ENCODE measurements at regions of chr2 and their contacts with region 1.

Region 1: DNA sequence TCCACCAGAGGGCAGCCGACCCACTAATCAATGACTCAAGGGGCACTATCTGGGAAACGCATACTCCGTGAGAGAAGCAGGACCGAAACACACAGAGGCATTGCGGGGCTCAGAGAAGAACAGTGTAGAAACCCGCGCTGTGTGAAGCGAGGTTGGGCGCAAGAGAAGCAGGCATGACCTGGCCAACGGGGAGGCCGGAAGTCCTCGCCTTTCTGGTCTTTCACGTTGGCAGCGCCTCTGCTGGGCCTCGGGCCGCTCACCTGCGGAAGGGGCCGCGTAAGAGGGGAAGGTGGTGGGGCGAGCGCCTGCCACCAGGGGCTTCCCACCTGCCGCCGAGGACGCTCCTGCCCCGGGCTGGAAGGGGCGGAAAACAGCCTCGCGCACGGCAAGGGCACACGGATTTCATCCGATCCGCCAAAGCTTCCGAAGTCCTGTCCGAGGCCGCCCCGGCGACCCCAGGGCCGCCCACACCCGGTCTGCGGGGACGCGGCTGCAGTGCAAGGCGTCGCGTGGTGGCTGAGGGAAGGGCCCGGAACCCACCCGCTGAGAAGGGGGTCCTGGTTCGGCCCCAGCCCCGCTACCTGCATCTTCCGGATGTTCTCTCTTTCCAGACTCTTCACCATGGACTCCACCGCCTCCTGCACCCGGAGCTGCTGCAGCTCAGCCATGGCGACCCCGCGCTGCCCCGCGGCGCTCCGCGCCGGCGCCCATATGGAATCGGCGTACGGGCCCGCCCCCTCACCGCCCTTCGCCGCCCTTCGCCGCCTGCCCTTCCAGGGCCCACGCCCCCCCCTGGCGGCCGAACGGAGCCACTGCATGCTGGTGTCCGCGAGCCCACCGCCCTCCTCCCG is at the start of gene FAM136A:
- DNase-seq: peak; percentile 97
- H3K4me3 Mint-ChIP-seq: peak within 1 kb of the TSS; percentile 91
- H3K27ac Mint-ChIP-seq: peak within 1 kb of the TSS; percentile 93
- H3K4me1 Mint-ChIP-seq: peaks cover 39% of the 10 kb centered on the region
- H3K27me3 Mint-ChIP-seq: no peaks in the 10 kb centered on the region
- total RNA-seq, gene FAM136A: 85.5 and 89.7 TPM in 2 replicates

Region 2: DNA sequence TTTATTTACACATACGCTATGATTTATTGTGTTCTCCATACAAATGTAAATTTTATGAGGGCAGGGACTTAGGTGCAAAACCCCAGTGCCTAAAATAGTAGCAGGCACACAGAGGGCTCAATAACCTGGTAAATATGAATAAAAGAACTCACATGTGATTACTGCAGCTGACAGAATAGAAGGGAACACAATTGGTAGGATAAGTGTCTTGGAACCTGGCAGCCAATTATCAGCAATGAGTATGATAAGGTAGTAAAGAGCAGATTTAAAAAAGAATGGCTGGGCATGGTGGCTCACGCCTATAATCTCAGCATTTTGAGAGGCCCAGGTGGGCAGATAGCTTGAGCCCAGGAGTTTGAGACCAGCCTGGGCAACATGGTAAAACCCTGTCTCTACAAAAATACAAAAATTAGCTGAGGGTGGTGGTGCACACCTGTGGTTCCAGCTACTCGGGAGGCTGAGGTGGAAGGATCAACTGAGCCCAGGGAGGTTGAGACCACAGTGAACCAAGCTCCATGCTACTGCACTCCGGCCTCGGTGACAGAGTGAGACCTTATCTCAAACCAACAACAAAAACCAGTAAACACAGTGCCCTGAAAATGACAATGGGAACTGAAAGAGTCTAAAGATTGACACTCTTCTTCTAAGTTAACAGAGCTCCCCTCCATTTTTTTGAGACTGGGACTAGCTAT is 17.9 kb before region 1 on chr2:
- intact Hi-C with region 1: no loop called
- DNase-seq: no peak
- H3K4me3 Mint-ChIP-seq: no peak overlapping the region
- H3K27ac Mint-ChIP-seq: no peak overlapping the region
- H3K4me1 Mint-ChIP-seq: peaks cover 26% of the 10 kb centered on the region
- H3K27me3 Mint-ChIP-seq: no peaks in the 10 kb centered on the region

Region 3: GRCh38 chr2:70553584-70554337 is 252.2 kb after region 1 on chr2 and contains the start of gene TGFA:
- intact Hi-C with region 1: loop called (anchors 5 kb)
- DNase-seq: peak; percentile 88
- H3K4me3 Mint-ChIP-seq: peak within 1 kb of the TSS; percentile 85
- H3K27ac Mint-ChIP-seq: no peak within 1 kb of the TSS
- H3K4me1 Mint-ChIP-seq: peaks cover 15% of the 10 kb centered on the region
- H3K27me3 Mint-ChIP-seq: peaks cover 68% of the 10 kb centered on the region
- total RNA-seq, gene TGFA: not detected in 2 replicates

Region 4: GRCh38 chr2:70647873-70648481 is 346.4 kb after region 1 on chr2:
- intact Hi-C with region 1: loop called (anchors 1 kb)
- DNase-seq: peak; percentile 91
- H3K4me3 Mint-ChIP-seq: no peak overlapping the region
- H3K27ac Mint-ChIP-seq: no peak overlapping the region
- H3K4me1 Mint-ChIP-seq: peaks cover 2% of the 10 kb centered on the region
- H3K27me3 Mint-ChIP-seq: peaks cover 24% of the 10 kb centered on the region

Region 5: DNA sequence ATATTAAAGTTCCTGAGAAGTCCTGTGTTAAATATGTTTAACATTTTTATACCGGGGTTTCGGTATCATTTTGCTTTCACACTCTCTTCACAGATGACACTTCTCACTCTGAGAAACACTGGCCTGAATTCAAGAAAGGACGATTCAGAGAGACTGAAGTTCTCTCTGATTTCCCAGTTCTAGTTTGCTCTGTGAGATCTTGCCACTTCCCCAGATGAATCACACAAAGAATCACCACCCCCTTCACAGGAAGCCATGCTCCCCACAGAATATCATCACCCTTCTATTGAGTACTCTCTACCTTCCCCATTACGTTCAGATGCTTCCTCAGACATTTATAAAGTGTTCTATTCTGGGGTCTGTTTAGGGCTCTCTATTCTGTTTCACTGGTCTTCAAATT is 550.1 kb after region 1 on chr2:
- intact Hi-C with region 1: loop called (anchors 10 kb)
- DNase-seq: peak; percentile 79
- H3K4me3 Mint-ChIP-seq: peak overlapping the region; percentile 12
- H3K27ac Mint-ChIP-seq: peak overlapping the region; percentile 69
- H3K4me1 Mint-ChIP-seq: peaks cover 23% of the 10 kb centered on the region
- H3K27me3 Mint-ChIP-seq: peaks cover 2% of the 10 kb centered on the region

Measured in activated CD4-positive, alpha-beta T cell treated with anti-CD3 and anti-CD28 coated beads, Interleukin-2, amount 10 ng/mL, durations not matched to agents 24 days and 14 days (primary cell).